SK-N-SH (cell line): ENCODE measurements at regions of chr13 and their contacts with region 1.

Region 1: DNA sequence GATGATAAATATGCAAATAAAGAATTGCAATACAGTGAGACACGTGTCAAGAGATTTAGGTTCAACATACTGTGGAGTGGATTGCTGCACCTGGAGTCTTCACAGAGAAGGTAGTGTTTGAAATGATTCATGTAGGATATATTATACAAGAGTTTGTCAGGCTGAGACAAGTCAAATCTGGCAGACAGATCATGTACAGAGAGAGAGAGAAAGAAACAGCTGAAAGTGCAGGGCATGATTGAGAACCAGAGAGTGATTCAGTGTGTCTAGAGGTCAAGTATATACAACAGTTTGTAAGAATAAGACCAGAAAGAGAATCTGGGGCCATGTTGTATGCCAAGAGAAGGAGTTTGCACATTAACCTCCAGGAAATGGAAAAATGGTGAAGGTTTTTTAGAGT is 2.1 kb upstream of the VWA8 start:
- DNase-seq: no peak
- H3K4me3 ChIP-seq: no peak overlapping the region
- H3K27ac ChIP-seq: no peak overlapping the region
- H3K4me1 ChIP-seq: peaks cover 0 to 5% of the 10 kb centered on the region in 2 experiments; a peak in 2 of 4 replicates
- H3K27me3 ChIP-seq: no peaks in the 10 kb centered on the region
- CTCF ChIP-seq: no peak
- EP300 ChIP-seq: no peak
- RAD21 ChIP-seq: no peak

Region 2: GRCh38 chr13:41788552-41788951 is 174.4 kb before region 1 on chr13:
- CTCF ChIA-PET with region 1: no interaction called
- POLR2A ChIA-PET with region 1: no interaction called
- DNase-seq: no peak
- H3K4me3 ChIP-seq: no peak overlapping the region
- H3K27ac ChIP-seq: no peak overlapping the region
- H3K4me1 ChIP-seq: no peaks in the 10 kb centered on the region
- H3K27me3 ChIP-seq: no peaks in the 10 kb centered on the region
- CTCF ChIP-seq: no peak
- EP300 ChIP-seq: no peak
- RAD21 ChIP-seq: no peak

Region 3: DNA sequence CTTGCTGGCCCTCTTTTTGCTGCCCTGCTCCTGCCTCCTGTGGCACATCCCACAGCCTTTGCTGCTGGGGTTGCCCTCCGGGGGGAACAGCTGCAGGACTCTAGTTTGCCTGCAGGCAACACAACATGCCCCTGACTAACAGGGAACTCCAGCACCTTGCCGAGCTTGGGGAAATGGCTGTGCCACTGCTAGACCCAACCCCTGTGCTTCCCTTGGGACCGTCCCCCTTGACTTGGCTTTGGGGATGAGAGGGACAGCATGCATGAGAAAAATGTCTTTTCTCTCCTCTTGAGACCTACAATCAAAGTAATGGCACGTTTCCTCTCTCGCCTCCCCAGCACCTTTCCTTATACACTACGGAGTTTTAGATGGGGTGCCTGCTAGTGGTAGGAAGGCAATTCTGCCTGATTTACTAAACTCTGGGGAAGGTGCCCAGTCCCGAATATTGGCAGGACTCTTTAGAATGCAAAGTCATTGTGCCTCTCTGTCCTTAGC is 10.3 kb after region 1 on chr13:
- CTCF ChIA-PET with region 1: interaction called, 10 read pairs
- POLR2A ChIA-PET with region 1: no interaction called
- DNase-seq: no peak
- H3K4me3 ChIP-seq: no peak overlapping the region
- H3K27ac ChIP-seq: no peak overlapping the region
- H3K4me1 ChIP-seq: no peaks in the 10 kb centered on the region
- H3K27me3 ChIP-seq: no peaks in the 10 kb centered on the region
- CTCF ChIP-seq: no peak
- EP300 ChIP-seq: no peak
- RAD21 ChIP-seq: no peak

Region 4: DNA sequence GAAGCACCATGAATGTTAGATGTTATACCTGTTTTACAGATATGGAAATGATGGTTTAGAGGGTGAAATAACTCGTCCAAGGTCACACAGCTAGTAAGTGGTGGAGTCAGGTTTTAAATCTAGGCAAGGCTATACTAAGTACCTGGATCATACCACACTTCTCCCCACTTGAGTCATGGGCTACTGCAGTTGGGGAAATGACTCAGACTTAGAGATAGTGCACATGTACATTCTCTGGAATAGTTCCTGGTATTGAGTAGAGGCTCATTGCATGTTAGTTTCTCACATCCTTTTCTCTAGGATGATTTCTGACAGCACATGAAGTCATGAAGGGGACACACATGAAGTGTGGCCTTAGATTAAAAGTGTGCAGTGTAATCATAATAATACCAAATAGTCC is 534.8 kb after region 1 on chr13:
- CTCF ChIA-PET with region 1: no interaction called
- POLR2A ChIA-PET with region 1: no interaction called
- DNase-seq: no peak
- H3K4me3 ChIP-seq: no peak overlapping the region
- H3K27ac ChIP-seq: no peak overlapping the region
- H3K4me1 ChIP-seq: peaks cover 0 to 8% of the 10 kb centered on the region in 2 experiments; a peak in 2 of 4 replicates
- H3K27me3 ChIP-seq: no peaks in the 10 kb centered on the region
- CTCF ChIP-seq: no peak
- EP300 ChIP-seq: no peak
- RAD21 ChIP-seq: no peak